WTC11 (cell line): ENCODE measurements at regions of chr14 and their contacts with region 1.

Region 1: GRCh38 chr14:94423453-94424056 is 29.0 kb downstream of the SERPINA11 start:
- DNase-seq: peak; percentile 90
- ATAC-seq: peak; percentile 98
- H3K4me3 Mint-ChIP-seq: no peak overlapping the region
- H3K27ac Mint-ChIP-seq: no peak overlapping the region
- H3K4me1 Mint-ChIP-seq: peaks cover 14% of the 10 kb centered on the region
- H3K27me3 Mint-ChIP-seq: peaks cover 2% of the 10 kb centered on the region; the same call in 1 of the 2 replicates
- CTCF ChIP-seq: peak; percentile 56

Region 2: GRCh38 chr14:94439453-94440057 is 16.0 kb after region 1 on chr14:
- CTCF ChIA-PET with region 1: interaction called, 22 read pairs
- POLR2A ChIA-PET with region 1: no interaction called
- DNase-seq: no peak
- ATAC-seq: peak; percentile 51; the same call in 1 of the 2 replicates
- H3K4me3 Mint-ChIP-seq: no peak overlapping the region
- H3K27ac Mint-ChIP-seq: no peak overlapping the region
- H3K4me1 Mint-ChIP-seq: peaks cover 5% of the 10 kb centered on the region; the same call in 1 of the 2 replicates
- H3K27me3 Mint-ChIP-seq: no peaks in the 10 kb centered on the region
- CTCF ChIP-seq: no peak

Region 3: DNA sequence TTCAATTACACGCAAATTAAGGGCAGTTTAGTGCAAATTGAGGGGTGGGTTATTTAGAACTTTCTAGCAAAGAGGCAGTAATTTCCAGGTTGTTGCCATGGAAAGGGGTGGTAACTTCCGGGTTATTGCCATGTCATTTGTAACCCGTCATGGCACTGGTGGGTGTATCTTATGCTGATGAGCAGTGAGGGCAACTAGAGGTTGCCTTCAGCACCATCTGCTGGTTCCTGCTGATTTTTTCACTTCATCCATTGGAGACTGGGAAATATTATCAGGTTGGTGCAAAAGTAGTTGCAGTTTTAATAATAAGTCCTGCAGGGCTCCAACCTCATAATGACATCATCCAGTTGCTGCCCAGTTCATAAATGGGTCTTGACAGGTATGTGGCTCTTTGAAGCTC is 113.3 kb after region 1 on chr14:
- CTCF ChIA-PET with region 1: interaction called, 10 read pairs
- POLR2A ChIA-PET with region 1: no interaction called
- DNase-seq: no peak
- ATAC-seq: peak; percentile 83
- H3K4me3 Mint-ChIP-seq: no peak overlapping the region
- H3K27ac Mint-ChIP-seq: no peak overlapping the region
- H3K4me1 Mint-ChIP-seq: peaks cover 12% of the 10 kb centered on the region
- H3K27me3 Mint-ChIP-seq: no peaks in the 10 kb centered on the region; the same call in 1 of the 2 replicates
- CTCF ChIP-seq: no peak

Region 4: GRCh38 chr14:94571950-94572349 is 148.4 kb after region 1 on chr14:
- CTCF ChIA-PET with region 1: no interaction called
- POLR2A ChIA-PET with region 1: no interaction called
- DNase-seq: no peak
- ATAC-seq: no peak
- H3K4me3 Mint-ChIP-seq: no peak overlapping the region
- H3K27ac Mint-ChIP-seq: no peak overlapping the region
- H3K4me1 Mint-ChIP-seq: no peaks in the 10 kb centered on the region
- H3K27me3 Mint-ChIP-seq: no peaks in the 10 kb centered on the region; the same call in 1 of the 2 replicates
- CTCF ChIP-seq: no peak